CD4-positive, alpha-beta T cell (primary cell): ENCODE measurements at regions of chr20 and their contacts with region 1.

Region 1: DNA sequence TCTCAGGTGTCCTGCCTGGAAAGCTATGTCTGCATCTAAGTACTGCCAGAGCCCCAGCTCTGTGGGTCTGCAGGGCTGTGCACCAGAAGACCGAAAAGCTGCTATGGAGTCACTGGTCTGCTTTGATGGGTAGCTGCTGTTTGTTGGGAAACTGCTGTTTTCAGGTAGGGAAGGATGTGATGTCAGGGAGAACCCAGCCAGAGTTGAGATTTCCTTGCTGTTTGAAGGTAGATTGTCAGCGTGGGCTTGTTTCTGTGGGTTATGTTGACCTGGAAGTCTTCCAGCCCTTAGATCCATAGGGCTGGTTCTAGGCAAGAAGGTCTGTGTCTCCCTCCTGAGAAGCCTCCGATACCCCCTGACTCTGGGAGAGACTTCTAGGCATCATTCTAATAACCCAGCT is 12.2 kb upstream of the SHLD1 start:
- DNase-seq: peak in 4 of 14 experiments; percentile 23 to 35 (median 32)
- ATAC-seq: peak; percentile 12
- H3K4me3 ChIP-seq: no peak overlapping the region
- H3K4me3 Mint-ChIP-seq: peak overlapping the region; percentile 27
- H3K27ac ChIP-seq: peak overlapping the region in 1 of 2 donors; percentile 59
- H3K27ac Mint-ChIP-seq: peak overlapping the region; percentile 91
- H3K4me1 ChIP-seq: peaks cover 28% of the 10 kb centered on the region
- H3K4me1 Mint-ChIP-seq: peaks cover 44% of the 10 kb centered on the region
- H3K27me3 ChIP-seq: no peaks in the 10 kb centered on the region
- H3K27me3 Mint-ChIP-seq: no peaks in the 10 kb centered on the region
- CTCF ChIP-seq: no peak

Region 2: DNA sequence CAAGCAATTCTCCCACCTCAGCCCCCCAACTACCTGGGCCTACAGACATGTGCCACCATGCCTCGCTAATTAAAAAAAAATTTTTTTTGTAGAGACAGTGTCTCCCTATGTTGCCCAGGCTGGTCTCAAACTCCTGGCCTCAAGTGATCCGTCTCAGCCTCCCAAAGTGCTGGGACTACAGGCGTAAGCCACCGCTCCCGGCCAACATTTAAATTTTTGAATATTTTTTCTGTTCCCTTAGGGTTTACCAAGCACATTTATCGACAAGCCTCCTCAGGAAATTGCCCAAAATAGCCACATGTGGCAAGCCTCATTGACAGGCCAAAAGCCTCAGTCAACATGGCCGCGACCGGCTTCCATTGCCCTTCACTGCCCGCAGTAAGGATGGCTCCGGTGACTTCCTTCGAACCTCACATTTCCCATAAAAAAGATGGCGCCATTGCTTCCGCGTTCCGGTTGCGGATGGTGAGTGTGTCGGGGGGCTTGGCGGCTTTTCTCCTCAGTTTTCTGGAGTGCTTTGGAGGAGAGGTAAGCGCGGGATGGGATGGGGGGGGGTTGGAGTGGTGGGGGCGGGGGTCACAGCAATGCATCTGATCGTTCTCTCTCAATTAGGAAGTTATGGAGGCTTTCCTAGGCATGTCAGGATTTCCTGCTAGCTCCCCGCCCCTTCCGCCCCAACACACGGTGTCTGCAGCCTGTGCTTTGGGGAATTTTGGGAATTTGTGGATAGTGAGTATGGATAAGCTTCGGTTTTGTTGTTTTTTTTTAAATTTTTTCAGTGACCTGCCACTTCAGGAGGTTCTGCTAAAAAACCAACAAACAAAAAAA is 12.2 kb after region 1 on chr20 and contains the start of gene SHLD1:
- CTCF ChIA-PET with region 1: no interaction called
- POLR2A ChIA-PET with region 1: no interaction called
- intact Hi-C with region 1: loop called in 1 of 2 experiments (anchors 1 kb)
- DNase-seq: peak; percentile 67 to 91 (median 76)
- ATAC-seq: peak; percentile 98
- H3K4me3 ChIP-seq: peak within 1 kb of the TSS; percentile 75
- H3K4me3 Mint-ChIP-seq: peak within 1 kb of the TSS; percentile 96
- H3K27ac ChIP-seq: peak within 1 kb of the TSS; percentile 53 to 61
- H3K27ac Mint-ChIP-seq: peak within 1 kb of the TSS; percentile 87
- H3K4me1 ChIP-seq: peaks cover 23% of the 10 kb centered on the region
- H3K4me1 Mint-ChIP-seq: peaks cover 37% of the 10 kb centered on the region
- H3K27me3 ChIP-seq: no peaks in the 10 kb centered on the region
- H3K27me3 Mint-ChIP-seq: no peaks in the 10 kb centered on the region
- CTCF ChIP-seq: no peak
- total RNA-seq, gene SHLD1: 7.0 to 7.3 TPM

Region 3: DNA sequence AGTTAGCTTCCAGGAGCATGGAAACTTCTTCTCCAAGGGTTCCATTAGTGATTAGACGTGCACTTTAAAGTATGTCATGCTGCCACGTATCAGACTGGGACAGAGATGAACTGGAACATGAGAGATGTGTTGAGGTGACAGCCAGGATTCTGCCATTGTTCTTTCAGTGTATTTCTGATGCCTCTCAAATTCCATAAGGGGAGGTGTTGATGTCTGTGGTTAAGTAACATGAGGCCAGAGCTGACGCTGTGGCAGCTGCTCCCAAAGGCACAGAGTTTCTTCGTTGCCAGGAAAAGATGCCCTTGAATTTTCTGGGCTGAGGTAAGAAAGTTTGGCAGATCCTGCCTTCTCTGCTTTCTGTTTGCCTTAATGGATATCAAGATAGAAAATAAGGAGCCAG is 148.8 kb after region 1 on chr20:
- CTCF ChIA-PET with region 1: no interaction called
- POLR2A ChIA-PET with region 1: no interaction called
- intact Hi-C with region 1: no loop called
- DNase-seq: no peak
- ATAC-seq: no peak
- H3K4me3 ChIP-seq: no peak overlapping the region
- H3K4me3 Mint-ChIP-seq: no peak overlapping the region
- H3K27ac ChIP-seq: no peak overlapping the region
- H3K27ac Mint-ChIP-seq: no peak overlapping the region
- H3K4me1 ChIP-seq: no peaks in the 10 kb centered on the region
- H3K4me1 Mint-ChIP-seq: peaks cover 4% of the 10 kb centered on the region
- H3K27me3 ChIP-seq: no peaks in the 10 kb centered on the region
- H3K27me3 Mint-ChIP-seq: no peaks in the 10 kb centered on the region
- CTCF ChIP-seq: no peak